Breast epithelium (tissue), 4 donors: ENCODE measurements at regions of chr6 and their contacts with region 1.

Region 1: DNA sequence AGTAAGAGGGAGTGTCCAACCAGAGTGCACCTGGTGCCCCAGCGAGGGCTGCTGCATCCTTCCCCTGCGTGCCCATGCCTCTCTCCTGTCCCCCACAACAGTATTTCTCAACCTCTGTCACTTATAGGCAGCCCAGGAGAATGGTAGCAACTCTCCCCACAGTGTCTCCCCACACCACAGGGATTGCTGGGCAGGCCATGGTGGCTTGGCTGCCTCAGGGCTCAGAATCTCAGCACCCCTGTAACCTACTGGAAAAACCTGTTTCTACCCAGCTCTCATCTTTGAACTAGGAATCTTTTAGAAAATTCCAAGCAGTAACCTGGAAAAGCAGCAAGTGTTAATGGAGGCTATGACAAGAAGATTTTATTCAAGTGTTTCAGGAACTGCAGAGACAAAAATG is 38.1 kb downstream of the CD164 start:
- DNase-seq: no peak
- H3K4me3 ChIP-seq: no peak overlapping the region
- H3K27ac ChIP-seq: peak overlapping the region; percentile 51 to 70
- H3K4me1 ChIP-seq: peaks cover 0 to 5% of the 10 kb centered on the region in 2 donors
- H3K27me3 ChIP-seq: no peaks in the 10 kb centered on the region
- CTCF ChIP-seq: no peak
- POLR2A ChIP-seq: no peak

Region 2: DNA sequence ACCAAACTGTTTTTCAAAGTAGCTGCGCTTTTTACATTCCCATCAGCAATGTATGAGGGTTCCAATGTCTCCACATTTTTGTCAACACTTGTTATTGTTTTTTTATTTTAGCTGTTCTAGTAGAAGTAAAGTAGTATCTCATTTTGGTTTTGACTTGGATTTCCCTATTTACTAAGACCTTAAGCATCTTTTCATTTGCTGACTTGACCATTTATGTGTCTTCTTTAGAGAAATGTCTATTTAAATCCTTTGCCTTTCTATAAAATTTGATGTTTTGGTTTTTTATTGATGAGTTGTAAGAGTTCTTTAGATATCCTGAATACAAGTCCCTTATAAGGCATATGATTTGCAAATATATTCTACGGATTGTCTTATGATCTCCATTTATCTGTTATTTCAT is 72.6 kb before region 1 on chr6:
- intact Hi-C with region 1: loop called (anchors 2 kb)
- DNase-seq: no peak
- H3K4me3 ChIP-seq: no peak overlapping the region
- H3K27ac ChIP-seq: no peak overlapping the region
- H3K4me1 ChIP-seq: no peaks in the 10 kb centered on the region
- H3K27me3 ChIP-seq: no peaks in the 10 kb centered on the region
- CTCF ChIP-seq: no peak
- POLR2A ChIP-seq: no peak

Region 3: GRCh38 chr6:109359248-109359647 is 15.0 kb after region 1 on chr6:
- intact Hi-C with region 1: no loop called
- DNase-seq: no peak
- H3K4me3 ChIP-seq: no peak overlapping the region
- H3K27ac ChIP-seq: no peak overlapping the region
- H3K4me1 ChIP-seq: no peaks in the 10 kb centered on the region
- H3K27me3 ChIP-seq: no peaks in the 10 kb centered on the region
- CTCF ChIP-seq: no peak
- POLR2A ChIP-seq: no peak